ENCODE measurements at regions of chr2 and their contacts with region 1.

Region 1: DNA sequence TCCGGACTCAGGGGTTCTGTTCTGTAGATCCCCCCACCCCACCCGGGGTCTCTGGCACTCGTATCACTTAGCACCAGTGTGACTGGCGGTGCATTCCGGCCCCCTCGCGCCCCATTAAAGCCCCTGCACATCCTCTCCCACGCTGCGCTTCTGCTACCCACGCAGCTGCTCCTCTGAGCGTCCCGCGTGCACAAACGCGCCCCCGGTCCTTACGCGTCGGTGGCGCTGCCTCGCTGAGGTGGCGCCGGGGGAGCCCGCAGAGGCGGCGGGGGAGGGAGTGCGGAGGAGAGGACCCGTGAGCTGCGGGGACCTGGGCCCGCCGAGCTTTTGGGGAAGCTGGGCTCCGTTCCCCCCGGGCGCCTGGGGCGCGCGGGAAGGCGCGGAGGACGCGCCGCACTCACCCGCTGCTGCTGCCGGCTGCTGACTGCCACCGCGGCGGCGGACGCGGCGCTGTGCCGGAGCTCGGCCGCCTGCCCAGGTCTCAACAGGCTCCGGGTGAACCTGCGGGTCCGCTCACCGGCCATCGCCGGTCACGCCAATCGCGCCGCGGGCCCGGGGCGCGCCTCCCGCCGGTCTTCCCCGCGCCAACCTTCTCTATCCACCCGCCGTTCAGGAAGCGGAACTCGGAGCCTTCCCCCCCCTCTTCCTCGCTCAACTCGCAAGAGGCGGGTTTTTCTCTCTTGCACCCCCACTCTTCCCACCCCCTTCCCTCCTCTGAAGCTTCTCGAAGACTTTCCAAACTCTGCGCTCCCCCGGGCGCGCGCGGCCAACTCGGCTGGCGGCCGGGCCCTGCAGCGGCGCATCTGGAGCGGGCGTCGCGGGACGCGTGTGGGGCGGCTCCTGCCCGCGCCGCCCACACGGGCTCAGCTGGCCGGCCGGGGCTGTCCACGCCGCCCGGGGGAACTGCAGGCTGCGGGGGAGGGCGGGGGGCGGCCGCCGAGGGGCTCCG is at the start of gene DOCK10:
- DNase-seq: no peak
- ATAC-seq: peak; percentile 78
- H3K4me3 ChIP-seq: peak within 1 kb of the TSS; percentile 50 to 54
- H3K27ac ChIP-seq: no peak within 1 kb of the TSS
- H3K4me1 ChIP-seq: peaks cover 5% of the 10 kb centered on the region; the same call in 1 of the 2 replicates
- H3K27me3 ChIP-seq: peaks cover 48% of the 10 kb centered on the region
- CTCF ChIP-seq: peak; percentile 35
- total RNA-seq, gene DOCK10: 5.8 TPM

Region 2: GRCh38 chr2:224894356-224894755 is 147.8 kb before region 1 on chr2:
- CTCF ChIA-PET with region 1: no interaction called
- POLR2A ChIA-PET with region 1: no interaction called
- in situ Hi-C with region 1: no loop called
- intact Hi-C with region 1: no loop called
- DNase-seq: no peak
- ATAC-seq: no peak
- H3K4me3 ChIP-seq: no peak overlapping the region
- H3K27ac ChIP-seq: no peak overlapping the region
- H3K4me1 ChIP-seq: no peaks in the 10 kb centered on the region
- H3K27me3 ChIP-seq: no peaks in the 10 kb centered on the region
- CTCF ChIP-seq: no peak

Region 3: GRCh38 chr2:224947566-224947965 is 94.6 kb before region 1 on chr2:
- CTCF ChIA-PET with region 1: interaction called, 11 read pairs
- POLR2A ChIA-PET with region 1: no interaction called
- in situ Hi-C with region 1: no loop called
- intact Hi-C with region 1: no loop called
- DNase-seq: no peak
- ATAC-seq: no peak
- H3K4me3 ChIP-seq: no peak overlapping the region
- H3K27ac ChIP-seq: no peak overlapping the region
- H3K4me1 ChIP-seq: no peaks in the 10 kb centered on the region
- H3K27me3 ChIP-seq: no peaks in the 10 kb centered on the region
- CTCF ChIP-seq: no peak

Measured in Panc1 (cell line).